Activated CD8-positive, alpha-beta T cell treated with anti-CD3 and anti-CD28 coated beads for 36 hours (primary cell): ENCODE measurements at regions of chr1 and their contacts with region 1.

Region 1: DNA sequence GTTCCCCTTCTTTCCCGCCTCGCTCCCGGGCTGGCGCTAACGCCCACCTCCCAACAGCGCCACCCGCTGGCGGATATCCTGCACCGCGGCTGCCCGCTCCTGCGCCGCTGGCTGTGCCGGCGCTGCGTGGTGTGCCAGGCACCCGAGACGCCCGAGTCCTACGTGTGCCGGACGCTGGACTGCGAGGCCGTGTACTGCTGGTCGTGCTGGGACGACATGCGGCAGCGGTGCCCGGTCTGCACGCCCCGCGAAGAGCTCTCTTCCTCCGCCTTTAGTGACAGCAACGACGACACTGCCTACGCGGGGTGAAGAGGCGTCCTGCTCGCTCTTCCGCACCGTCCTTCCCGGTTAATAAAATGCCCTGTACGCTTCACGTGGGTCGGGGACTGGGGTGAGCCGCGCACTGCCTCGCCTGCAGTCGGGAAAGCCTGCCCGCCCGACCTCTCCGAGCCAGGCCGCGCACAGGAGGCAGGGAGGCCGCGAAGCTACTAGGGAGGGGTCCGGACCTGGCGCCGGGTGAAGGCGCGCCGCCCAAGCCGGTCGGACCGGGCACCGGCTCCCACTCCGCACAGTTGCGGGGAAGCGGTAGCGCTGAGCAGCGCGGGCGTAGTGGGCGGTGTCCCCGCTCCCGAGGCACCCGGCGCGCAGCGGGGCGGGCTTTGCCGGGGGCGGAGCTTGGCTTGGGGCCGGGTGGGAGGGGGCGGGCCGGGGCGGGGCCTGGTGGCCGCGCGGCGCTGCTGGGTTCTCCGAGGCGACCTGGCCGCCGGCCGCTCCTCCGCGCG is at the start of gene ADAM15:
- DNase-seq: peak; percentile 80
- ATAC-seq: peak; percentile 79
- H3K4me3 Mint-ChIP-seq: peak within 1 kb of the TSS; percentile 88
- H3K27ac Mint-ChIP-seq: peak within 1 kb of the TSS; percentile 60
- H3K4me1 Mint-ChIP-seq: peaks cover 20% of the 10 kb centered on the region
- H3K27me3 Mint-ChIP-seq: no peaks in the 10 kb centered on the region
- CTCF ChIP-seq: peak; percentile 99
- total RNA-seq, gene ADAM15: 36.4 to 37.2 TPM

Region 2: GRCh38 chr1:154911691-154912550 is 138.8 kb before region 1 on chr1:
- CTCF ChIA-PET with region 1: no interaction called
- POLR2A ChIA-PET with region 1: no interaction called
- intact Hi-C with region 1: no loop called
- DNase-seq: no peak
- ATAC-seq: no peak
- H3K4me3 Mint-ChIP-seq: no peak overlapping the region
- H3K27ac Mint-ChIP-seq: no peak overlapping the region
- H3K4me1 Mint-ChIP-seq: no peaks in the 10 kb centered on the region
- H3K27me3 Mint-ChIP-seq: no peaks in the 10 kb centered on the region
- CTCF ChIP-seq: no peak

Region 3: DNA sequence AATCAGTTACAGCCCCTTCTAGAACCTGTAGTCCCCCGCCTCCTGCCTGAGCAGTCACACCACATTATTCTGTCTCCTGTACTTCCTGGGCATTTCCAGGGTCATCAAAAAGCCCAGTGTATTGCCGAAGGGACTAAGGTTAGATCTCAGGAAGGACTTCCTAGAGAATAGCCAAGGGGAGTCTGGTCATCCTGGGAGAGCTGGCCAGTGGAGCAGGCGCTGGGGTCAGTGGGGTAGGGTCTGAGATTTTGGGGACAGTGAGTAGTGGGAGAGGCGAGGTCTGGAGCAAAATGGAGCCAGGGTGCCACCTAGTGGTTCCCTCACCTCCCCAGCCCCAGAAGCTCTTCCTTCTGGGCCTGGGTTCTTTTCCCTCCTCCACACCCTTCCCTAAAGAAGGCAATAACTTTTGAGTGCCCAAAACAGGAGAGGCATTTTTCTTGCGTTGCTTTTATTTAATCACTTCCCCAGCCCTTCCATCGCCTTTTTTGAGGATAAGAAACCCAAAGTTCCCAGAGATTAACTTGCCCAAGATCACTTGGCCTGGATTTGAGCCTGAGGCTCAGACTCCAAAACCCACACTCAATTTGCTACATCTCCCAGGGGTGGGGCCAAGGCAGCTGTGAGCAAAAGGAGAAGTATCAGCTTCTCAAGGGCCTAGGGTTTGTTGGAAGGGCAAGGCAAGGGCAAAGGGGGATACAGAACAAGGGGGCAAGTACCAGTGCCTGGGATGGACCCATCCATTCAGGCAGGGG is 106.9 kb before region 1 on chr1:
- CTCF ChIA-PET with region 1: no interaction called
- POLR2A ChIA-PET with region 1: no interaction called
- intact Hi-C with region 1: no loop called
- DNase-seq: peak; percentile 59
- ATAC-seq: no peak
- H3K4me3 Mint-ChIP-seq: no peak overlapping the region
- H3K27ac Mint-ChIP-seq: peak overlapping the region; percentile 92
- H3K4me1 Mint-ChIP-seq: peaks cover 55% of the 10 kb centered on the region
- H3K27me3 Mint-ChIP-seq: no peaks in the 10 kb centered on the region
- CTCF ChIP-seq: peak; percentile 92

Region 4: GRCh38 chr1:154955718-154956543 is 94.8 kb before region 1 on chr1 and contains the start of gene PBXIP1:
- CTCF ChIA-PET with region 1: interaction called, 12 read pairs
- POLR2A ChIA-PET with region 1: no interaction called
- intact Hi-C with region 1: no loop called
- DNase-seq: peak; percentile 86
- ATAC-seq: peak; percentile 49
- H3K4me3 Mint-ChIP-seq: peak within 1 kb of the TSS; percentile 91
- H3K27ac Mint-ChIP-seq: peak within 1 kb of the TSS; percentile 97
- H3K4me1 Mint-ChIP-seq: peaks cover 69% of the 10 kb centered on the region
- H3K27me3 Mint-ChIP-seq: no peaks in the 10 kb centered on the region
- CTCF ChIP-seq: peak; percentile 26
- total RNA-seq, gene PBXIP1: 17.7 to 19.4 TPM

Region 5: DNA sequence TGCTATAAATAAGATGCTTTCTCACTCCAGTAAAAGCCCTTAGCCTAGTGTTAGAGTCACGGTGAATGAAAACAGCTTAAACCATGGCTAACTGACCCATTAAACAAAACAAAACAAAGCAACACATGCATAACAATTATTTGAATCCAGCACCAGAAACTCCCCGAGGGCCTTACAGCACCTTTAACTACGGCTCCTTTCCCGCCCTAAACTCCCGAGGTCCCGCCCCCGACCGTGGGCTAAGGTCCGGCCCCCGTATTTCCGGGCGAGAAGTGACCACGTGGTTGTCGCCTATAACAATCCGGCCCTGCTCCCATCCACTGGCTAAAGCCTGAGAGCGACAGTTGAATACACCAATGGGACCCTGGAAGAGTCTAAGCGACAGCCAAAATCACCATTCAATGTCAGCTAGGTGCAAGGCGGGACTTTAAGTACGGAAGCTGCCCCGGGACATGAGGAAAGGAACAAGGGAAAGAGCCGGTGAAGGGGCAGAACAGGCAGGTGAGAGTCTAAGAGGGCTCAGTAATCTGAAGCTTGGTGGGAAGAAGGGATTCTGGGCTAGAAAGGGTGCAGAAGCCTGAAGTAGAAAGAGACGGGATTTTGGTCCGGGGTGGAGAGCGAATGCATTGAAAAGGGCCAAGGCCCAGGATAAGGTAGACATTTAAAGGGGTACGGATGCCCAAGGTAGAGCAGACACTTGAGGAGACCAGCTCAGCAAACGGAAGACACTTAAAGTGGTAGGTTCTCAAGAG is 67.7 kb before region 1 on chr1 and contains the start of gene FLAD1:
- CTCF ChIA-PET with region 1: interaction called, 12 read pairs
- POLR2A ChIA-PET with region 1: interaction called, 3 read pairs
- intact Hi-C with region 1: no loop called
- DNase-seq: peak; percentile 98
- ATAC-seq: peak; percentile 99
- H3K4me3 Mint-ChIP-seq: no peak within 1 kb of the TSS
- H3K27ac Mint-ChIP-seq: no peak within 1 kb of the TSS
- H3K4me1 Mint-ChIP-seq: peaks cover 12% of the 10 kb centered on the region
- H3K27me3 Mint-ChIP-seq: no peaks in the 10 kb centered on the region
- CTCF ChIP-seq: no peak
- total RNA-seq, gene FLAD1: 31.5 to 32.9 TPM

Region 6: GRCh38 chr1:155063550-155064110 is 12.9 kb after region 1 on chr1 and contains the start of gene EFNA4:
- CTCF ChIA-PET with region 1: interaction called, 204 read pairs
- POLR2A ChIA-PET with region 1: interaction called, 7 read pairs
- intact Hi-C with region 1: no loop called
- DNase-seq: peak; percentile 88
- ATAC-seq: peak; percentile 80
- H3K4me3 Mint-ChIP-seq: peak within 1 kb of the TSS; percentile 77
- H3K27ac Mint-ChIP-seq: peak within 1 kb of the TSS; percentile 39
- H3K4me1 Mint-ChIP-seq: peaks cover 32% of the 10 kb centered on the region
- H3K27me3 Mint-ChIP-seq: no peaks in the 10 kb centered on the region
- CTCF ChIP-seq: no peak
- total RNA-seq, gene EFNA4: 7.1 to 7.8 TPM

Region 7: DNA sequence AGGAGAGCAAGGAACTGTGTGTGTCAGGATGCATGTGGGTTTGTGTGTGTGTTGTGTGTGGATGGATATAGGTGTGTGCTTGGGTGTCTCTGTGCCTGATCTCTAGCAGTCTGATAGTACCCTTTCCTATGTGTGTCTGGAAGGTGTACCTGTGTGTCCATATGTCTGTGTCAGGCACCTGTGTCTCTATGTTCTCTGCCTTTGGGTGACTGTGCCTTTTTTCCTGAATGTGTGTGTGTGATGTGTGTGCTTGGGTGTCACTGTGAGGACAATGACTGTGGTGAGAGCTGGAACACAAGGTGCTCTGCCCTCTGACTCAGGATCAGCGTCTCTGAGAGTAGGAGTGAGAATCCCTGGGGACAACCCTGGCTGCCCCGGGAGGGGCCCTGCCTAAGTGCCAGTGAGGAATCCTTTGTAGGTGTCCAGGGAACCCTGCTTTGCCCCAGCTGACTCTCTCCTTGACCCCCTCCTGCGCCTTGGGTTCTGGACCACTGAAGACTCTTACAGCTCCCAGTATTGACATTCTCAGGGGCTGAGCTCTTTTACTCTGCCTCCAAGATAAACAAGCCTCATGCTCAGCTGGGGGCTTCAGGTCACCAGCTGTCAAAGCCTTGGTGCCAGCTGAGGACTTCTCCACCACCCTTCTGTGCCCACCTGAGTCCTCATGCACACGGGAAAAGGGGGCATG is 27.2 kb after region 1 on chr1:
- CTCF ChIA-PET with region 1: interaction called, 278 read pairs
- POLR2A ChIA-PET with region 1: interaction called, 7 read pairs
- intact Hi-C with region 1: no loop called
- DNase-seq: no peak
- ATAC-seq: no peak
- H3K4me3 Mint-ChIP-seq: no peak overlapping the region
- H3K27ac Mint-ChIP-seq: no peak overlapping the region
- H3K4me1 Mint-ChIP-seq: peaks cover 32% of the 10 kb centered on the region
- H3K27me3 Mint-ChIP-seq: peaks cover 26% of the 10 kb centered on the region
- CTCF ChIP-seq: no peak